ENCODE measurements at regions of chr15 and their contacts with region 1.

Region 1: DNA sequence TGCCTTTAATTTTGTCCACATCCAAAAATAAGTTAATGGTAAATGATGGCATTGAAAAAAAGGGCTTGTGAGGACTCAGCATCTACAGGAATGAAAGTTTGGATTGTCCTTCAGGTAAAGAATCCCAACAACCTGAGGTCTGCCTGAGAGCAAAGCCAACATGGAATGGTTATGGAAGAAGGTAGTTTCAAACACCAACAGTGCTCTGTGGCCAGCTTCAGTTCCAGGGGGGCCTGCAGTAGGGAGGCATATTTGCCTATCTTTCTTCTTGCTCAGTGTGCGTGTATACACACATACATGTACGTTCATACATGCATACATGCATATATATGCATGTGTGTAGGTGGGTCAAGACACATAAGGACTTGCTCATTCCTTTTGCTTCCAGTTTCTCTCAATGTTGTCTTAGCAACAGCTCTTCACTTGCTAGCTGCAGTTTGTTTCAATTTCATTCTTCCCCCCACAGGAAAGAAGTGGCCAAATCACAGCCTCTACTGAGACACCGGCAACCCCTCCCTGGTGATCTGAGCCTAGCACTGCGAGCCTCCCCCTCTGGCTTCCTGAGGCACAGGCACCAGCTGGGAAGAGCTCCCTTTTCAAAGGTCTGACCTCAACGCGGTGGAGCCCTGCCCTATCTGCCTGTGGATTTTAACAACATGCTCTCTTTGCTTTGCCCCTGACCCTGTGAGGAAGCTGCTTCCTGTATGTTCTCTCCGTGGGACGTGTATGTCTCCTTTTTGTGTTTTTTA is 146.2 kb downstream of the KLF13 start:
- DNase-seq: peak; percentile 83
- CTCF ChIP-seq: no peak

Region 2: DNA sequence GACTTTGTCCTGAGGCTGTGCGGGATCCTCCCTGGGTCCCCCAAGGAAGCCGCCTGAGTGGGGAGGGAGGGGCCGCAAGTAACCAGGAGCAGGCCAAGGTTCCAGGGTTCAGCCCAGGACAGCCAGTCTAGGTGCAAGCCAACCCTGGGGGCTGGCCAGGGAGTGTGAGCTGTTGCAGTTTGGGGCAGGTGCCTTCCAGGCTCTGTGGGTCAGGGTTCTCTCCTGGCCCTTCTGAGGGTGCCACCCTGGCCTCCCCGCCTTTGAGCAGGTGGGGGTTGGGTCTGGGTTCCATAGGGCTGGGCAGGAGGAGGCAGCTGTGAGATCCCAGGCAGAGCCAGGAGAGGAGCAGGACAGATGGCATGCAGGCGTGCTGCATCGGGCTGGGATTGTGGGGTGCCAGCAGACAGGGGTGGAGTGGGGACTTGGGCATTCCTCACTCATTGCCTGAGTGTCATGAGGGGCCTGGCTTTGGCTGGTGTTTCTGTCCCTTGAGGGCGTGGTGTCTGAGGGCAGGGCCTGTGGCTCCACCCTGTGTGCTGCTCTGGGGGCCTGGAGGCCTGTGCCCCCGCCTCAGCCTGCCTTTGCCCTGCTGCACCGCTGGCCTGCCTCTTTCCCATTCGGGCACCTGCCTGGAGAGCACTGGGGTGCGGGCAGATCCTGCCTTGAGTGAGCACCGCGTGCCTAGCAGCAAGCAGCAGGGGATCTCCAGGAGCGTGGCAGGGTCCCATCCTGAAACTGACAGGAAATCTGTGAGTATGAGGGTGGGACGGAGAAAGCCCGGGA is 127.8 kb before region 1 on chr15:
- CTCF ChIA-PET with region 1: no interaction called
- POLR2A ChIA-PET with region 1: no interaction called
- DNase-seq: peak; percentile 63
- CTCF ChIP-seq: no peak

Region 3: DNA sequence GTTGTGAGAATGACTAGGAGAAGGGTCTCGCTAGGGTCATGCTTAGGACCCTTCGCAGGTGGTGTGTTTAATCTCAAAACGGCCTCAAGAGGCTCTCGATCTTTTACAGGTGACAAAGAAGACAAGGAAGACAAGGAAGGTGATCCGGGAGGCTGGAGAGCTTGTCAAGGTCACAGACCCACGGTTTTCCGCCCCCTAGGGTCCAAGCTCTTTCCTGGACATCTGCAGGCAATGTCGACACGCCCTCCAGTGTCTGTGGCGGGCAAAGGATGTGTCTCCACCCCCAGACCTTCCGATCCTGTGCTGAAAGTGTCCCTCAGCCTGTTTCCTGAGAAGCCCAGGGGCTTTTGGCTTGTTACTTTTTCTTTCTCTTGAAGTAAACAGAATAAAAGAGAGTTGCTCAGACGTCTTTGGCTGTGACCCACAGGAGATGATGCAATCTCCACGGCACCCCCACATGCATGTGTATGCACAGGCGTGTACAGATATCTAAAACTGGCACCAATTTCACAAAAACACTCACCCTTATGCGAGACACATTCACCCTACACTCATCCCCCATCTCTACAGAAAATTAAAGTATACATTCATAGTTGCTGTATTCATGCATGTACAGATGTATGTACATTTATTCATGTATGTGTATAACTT is 37.4 kb before region 1 on chr15:
- CTCF ChIA-PET with region 1: interaction called, 118 read pairs
- POLR2A ChIA-PET with region 1: interaction called, 3 read pairs
- DNase-seq: peak; percentile 84
- CTCF ChIP-seq: peak; percentile 91

Region 4: DNA sequence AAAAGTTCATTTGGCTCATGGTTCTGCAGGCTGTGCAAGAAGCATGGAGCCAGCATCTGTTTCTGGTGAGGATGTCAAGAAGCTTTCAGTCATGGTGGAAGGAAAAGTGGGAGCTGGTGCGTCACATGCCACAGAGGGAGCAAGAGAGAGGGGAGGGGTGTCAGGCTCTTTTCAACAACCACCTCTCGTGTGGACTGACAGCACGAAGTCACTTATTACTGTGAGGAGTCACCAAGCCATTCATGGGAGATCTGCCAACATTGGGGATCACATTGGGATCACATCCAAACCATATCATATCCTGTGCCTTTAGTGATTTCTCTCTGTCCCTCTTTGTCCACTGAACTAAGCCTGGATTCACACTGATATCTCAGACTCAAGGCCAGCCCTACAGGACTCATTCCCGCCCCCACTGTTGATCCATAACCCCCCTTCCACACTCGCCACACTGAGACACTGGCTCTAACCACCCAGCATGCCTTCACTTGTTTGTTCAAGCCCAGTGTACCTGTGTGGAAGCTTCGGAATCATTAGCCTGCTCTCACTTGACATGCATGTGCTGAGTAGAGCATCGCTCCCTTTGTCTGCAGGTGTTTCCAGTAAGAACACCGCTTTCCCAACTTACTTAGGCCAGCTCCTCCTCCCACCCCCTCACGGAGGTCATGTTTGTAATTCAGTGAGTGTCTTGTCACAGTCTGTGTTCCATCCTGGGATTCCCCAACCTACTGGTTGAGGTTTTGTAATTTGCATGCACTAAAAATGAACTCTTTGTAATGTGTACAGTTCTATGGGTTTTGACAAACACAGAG is 14.0 kb before region 1 on chr15:
- CTCF ChIA-PET with region 1: interaction called, 54 read pairs
- POLR2A ChIA-PET with region 1: interaction called, 6 read pairs
- DNase-seq: peak; percentile 81
- CTCF ChIP-seq: no peak

Region 5: GRCh38 chr15:31483053-31483985 is 10.5 kb after region 1 on chr15:
- CTCF ChIA-PET with region 1: interaction called, 158 read pairs
- POLR2A ChIA-PET with region 1: no interaction called
- DNase-seq: peak; percentile 76
- CTCF ChIP-seq: no peak

Measured in GM10248 (cell line).